GM18951 (cell line): ENCODE measurements at regions of chr2 and their contacts with region 1.

Region 1: GRCh38 chr2:217988014-217988839 is 14.6 kb downstream of the TNS1 start:
- POLR2A ChIP-seq: no peak

Region 2: GRCh38 chr2:217785544-217786045 is 202.6 kb before region 1 on chr2:
- in situ Hi-C with region 1: loop called (anchors 10 kb)
- POLR2A ChIP-seq: no peak

Region 3: GRCh38 chr2:218097975-218098374 is 109.7 kb after region 1 on chr2:
- in situ Hi-C with region 1: no loop called
- POLR2A ChIP-seq: no peak